OCI-LY7 (cell line): ENCODE measurements at regions of chr4 and their contacts with region 1.

Region 1: GRCh38 chr4:170522427-170522970 is 432.7 kb upstream of the AADAT start:
- DNase-seq: no peak
- H3K4me3 ChIP-seq: no peak overlapping the region
- H3K27ac ChIP-seq: no peak overlapping the region
- H3K4me1 ChIP-seq: no peaks in the 10 kb centered on the region
- CTCF ChIP-seq: no peak

Region 2: DNA sequence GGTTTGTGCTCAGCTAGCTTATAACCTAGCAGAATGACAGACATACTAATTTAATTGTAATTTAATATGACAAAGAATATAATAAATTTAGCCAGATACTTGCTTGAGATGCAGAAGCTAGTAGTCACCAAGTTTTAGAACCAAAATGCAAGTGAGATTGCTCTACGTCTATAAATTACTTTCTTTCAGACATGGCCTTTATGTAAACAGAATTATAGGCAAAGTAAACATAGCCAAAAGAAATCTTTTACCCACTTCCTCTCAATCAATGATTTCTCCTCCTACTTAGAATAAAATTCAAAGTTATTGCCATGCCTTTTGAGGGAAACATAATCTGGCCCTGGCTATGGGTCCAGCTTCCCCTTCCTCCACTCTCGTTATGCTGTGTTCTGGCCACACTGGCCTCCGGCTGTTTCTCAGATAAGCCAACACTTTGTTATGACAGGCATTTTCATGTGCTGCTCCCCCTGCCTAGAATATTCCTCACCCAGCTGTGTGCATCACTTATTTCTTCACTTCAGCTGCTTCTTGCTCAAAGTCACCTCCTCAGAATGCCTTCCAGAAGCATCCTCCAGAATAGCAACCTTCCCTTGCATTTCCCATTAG is 46.3 kb before region 1 on chr4:
- CTCF ChIA-PET with region 1: no interaction called
- POLR2A ChIA-PET with region 1: no interaction called
- intact Hi-C with region 1: loop called (anchors 1 kb)
- DNase-seq: no peak
- H3K4me3 ChIP-seq: no peak overlapping the region
- H3K27ac ChIP-seq: no peak overlapping the region
- H3K4me1 ChIP-seq: no peaks in the 10 kb centered on the region
- CTCF ChIP-seq: no peak